ENCODE measurements at regions of chr22 and their contacts with region 1.

Region 1: DNA sequence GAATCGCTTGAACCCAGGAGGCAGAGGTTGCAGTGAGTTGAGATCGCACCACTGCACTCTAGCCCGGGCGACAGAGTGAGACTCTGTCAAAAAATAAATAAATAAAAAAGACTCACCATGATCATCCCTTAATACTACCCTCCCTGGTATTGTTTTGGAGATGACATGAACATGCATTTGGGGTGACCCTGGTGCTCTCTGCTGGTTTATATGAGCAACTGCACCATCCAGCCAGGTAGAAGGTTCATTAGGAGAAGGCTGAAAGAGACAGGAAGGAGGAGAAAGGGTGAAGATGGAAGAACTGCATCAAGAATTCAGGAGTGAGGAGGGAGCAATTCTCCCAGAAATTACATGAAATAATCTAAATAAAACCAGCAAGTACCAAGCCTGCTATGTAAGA is 37.8 kb downstream of the SLC5A1 start:
- DNase-seq: peak; percentile 34
- ATAC-seq: peak; percentile 61
- H3K4me3 Mint-ChIP-seq: no peak overlapping the region
- H3K27ac Mint-ChIP-seq: no peak overlapping the region
- H3K4me1 Mint-ChIP-seq: no peaks in the 10 kb centered on the region
- H3K27me3 Mint-ChIP-seq: peaks cover 6% of the 10 kb centered on the region
- CTCF ChIP-seq: peak; percentile 77

Region 2: GRCh38 chr22:31585161-31585859 is 495.6 kb before region 1 on chr22:
- CTCF ChIA-PET with region 1: no interaction called
- POLR2A ChIA-PET with region 1: no interaction called
- intact Hi-C with region 1: no loop called
- DNase-seq: peak; percentile 41
- ATAC-seq: peak; percentile 42
- H3K4me3 Mint-ChIP-seq: no peak overlapping the region
- H3K27ac Mint-ChIP-seq: peak overlapping the region; percentile 67
- H3K4me1 Mint-ChIP-seq: peaks cover 43% of the 10 kb centered on the region
- H3K27me3 Mint-ChIP-seq: no peaks in the 10 kb centered on the region
- CTCF ChIP-seq: no peak

Region 3: GRCh38 chr22:31977141-31977841 is 103.6 kb before region 1 on chr22:
- CTCF ChIA-PET with region 1: interaction called, 75 read pairs
- POLR2A ChIA-PET with region 1: no interaction called
- intact Hi-C with region 1: loop called (anchors 5 kb)
- DNase-seq: peak; percentile 92
- ATAC-seq: peak; percentile 96
- H3K4me3 Mint-ChIP-seq: no peak overlapping the region
- H3K27ac Mint-ChIP-seq: no peak overlapping the region
- H3K4me1 Mint-ChIP-seq: peaks cover 2% of the 10 kb centered on the region
- H3K27me3 Mint-ChIP-seq: peaks cover 1% of the 10 kb centered on the region
- CTCF ChIP-seq: peak; percentile 65

Region 4: DNA sequence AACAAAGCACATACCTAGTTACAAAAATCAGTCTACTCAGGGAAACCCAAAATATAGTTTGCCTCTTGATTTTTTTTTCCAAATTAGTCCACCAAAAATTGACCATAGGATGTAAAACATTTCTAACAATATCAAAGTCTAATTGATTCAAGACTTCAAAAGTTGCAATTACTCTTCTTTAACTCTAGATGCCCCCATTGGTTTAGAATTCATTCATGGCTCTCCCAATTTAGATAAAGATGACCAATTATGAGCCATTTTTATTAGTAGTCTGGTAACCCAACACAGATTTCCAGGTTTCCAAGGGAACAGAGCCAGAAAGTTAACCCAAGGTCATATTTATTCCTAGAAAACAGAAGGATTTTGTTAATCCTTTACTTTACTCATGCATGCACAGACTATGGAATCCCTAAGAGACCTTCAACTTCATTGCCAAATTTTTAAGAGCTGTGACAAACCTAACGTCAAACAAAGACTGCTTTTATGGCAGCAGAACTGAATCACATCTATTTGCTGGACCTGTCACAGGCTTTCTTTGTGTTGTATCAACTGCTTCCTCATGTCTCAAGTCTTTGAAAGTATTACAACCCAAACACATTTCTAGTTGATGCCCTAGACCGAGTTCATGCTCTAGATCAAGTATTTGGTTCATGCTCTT is 22.9 kb after region 1 on chr22:
- CTCF ChIA-PET with region 1: no interaction called
- POLR2A ChIA-PET with region 1: no interaction called
- intact Hi-C with region 1: no loop called
- DNase-seq: no peak
- ATAC-seq: no peak
- H3K4me3 Mint-ChIP-seq: no peak overlapping the region
- H3K27ac Mint-ChIP-seq: no peak overlapping the region
- H3K4me1 Mint-ChIP-seq: no peaks in the 10 kb centered on the region
- H3K27me3 Mint-ChIP-seq: peaks cover 12% of the 10 kb centered on the region
- CTCF ChIP-seq: peak; percentile 55